ENCODE measurements at regions of chr16 and their contacts with region 1.

Region 1: GRCh38 chr16:3938848-3939624 is 58.5 kb upstream of the CREBBP start:
- DNase-seq: peak in 4 of 5 donors; percentile 56 to 64 (median 64)
- H3K4me3 ChIP-seq: peak overlapping the region in 1 of 2 donors; percentile 51
- H3K4me3 Mint-ChIP-seq: peak overlapping the region in 4 of 8 donors; percentile 31 to 72 (median 52)
- H3K27ac ChIP-seq: no peak overlapping the region
- H3K27ac Mint-ChIP-seq: no peak overlapping the region
- H3K4me1 ChIP-seq: peaks cover 12% of the 10 kb centered on the region
- H3K4me1 Mint-ChIP-seq: peaks cover 0 to 2% (median 0%) of the 10 kb centered on the region in 4 donors
- H3K27me3 ChIP-seq: no peaks in the 10 kb centered on the region
- H3K27me3 Mint-ChIP-seq: no peaks in the 10 kb centered on the region

Region 2: GRCh38 chr16:3961449-3961849 is 22.4 kb after region 1 on chr16:
- CTCF ChIA-PET with region 1: interaction called, 5 read pairs
- POLR2A ChIA-PET with region 1: no interaction called
- intact Hi-C with region 1: loop called (anchors 2 kb)
- DNase-seq: no peak
- H3K4me3 ChIP-seq: peak overlapping the region in 1 of 2 donors; percentile 32
- H3K4me3 Mint-ChIP-seq: peak overlapping the region in 4 of 8 donors; percentile 89 to 94 (median 91)
- H3K27ac ChIP-seq: no peak overlapping the region
- H3K27ac Mint-ChIP-seq: peak overlapping the region; percentile 53 to 97 (median 93)
- H3K4me1 ChIP-seq: peaks cover 25% of the 10 kb centered on the region
- H3K4me1 Mint-ChIP-seq: peaks cover 13 to 35% (median 21%) of the 10 kb centered on the region in 4 donors
- H3K27me3 ChIP-seq: no peaks in the 10 kb centered on the region
- H3K27me3 Mint-ChIP-seq: peaks cover 7 to 8% of the 10 kb centered on the region in 2 donors

Region 3: DNA sequence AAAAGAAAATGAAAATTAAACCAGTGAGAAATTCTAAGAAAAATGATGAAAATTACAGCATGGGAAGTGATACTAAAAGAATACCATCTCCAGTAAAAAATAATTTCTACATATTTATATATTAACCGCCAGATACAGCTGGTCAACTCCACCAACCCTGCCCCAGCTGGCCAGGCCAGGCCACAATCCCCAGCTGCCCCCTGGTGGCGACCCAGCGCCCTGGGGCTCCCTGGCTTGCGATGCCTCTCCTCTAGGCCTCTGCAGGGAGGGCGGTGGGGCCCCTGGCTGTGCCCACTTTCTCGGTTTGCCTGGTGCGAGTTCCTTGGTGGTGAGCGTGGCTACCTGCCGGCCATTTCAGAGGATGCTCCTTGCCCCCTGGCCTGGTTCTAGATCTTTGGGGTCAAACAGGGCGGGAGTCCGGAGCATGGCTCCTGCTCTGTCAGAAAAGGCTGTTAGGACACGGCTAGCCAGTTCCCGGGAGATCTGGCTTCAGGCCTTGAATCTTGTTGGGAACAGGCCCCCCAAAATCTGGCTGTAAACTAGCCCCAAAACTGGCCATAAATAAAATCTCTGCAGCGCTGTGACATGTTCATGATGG is 391.3 kb after region 1 on chr16:
- CTCF ChIA-PET with region 1: interaction called, 5 read pairs
- POLR2A ChIA-PET with region 1: interaction called, 3 read pairs
- intact Hi-C with region 1: loop called (anchors 2 kb)
- DNase-seq: peak; percentile 59 to 71 (median 61)
- H3K4me3 ChIP-seq: no peak overlapping the region
- H3K4me3 Mint-ChIP-seq: no peak overlapping the region
- H3K27ac ChIP-seq: no peak overlapping the region
- H3K27ac Mint-ChIP-seq: peak overlapping the region in 1 of 7 donors; percentile 50
- H3K4me1 ChIP-seq: peaks cover 9% of the 10 kb centered on the region
- H3K4me1 Mint-ChIP-seq: peaks cover 0 to 5% (median 1%) of the 10 kb centered on the region in 4 donors
- H3K27me3 ChIP-seq: no peaks in the 10 kb centered on the region
- H3K27me3 Mint-ChIP-seq: no peaks in the 10 kb centered on the region

Region 4: GRCh38 chr16:4957720-4958509 is 1018.9 kb after region 1 on chr16 and contains the start of gene SEC14L5:
- CTCF ChIA-PET with region 1: interaction called, 3 read pairs
- POLR2A ChIA-PET with region 1: no interaction called
- intact Hi-C with region 1: loop called (anchors 10 kb)
- DNase-seq: peak; percentile 86 to 96 (median 89)
- H3K4me3 ChIP-seq: peak within 1 kb of the TSS; percentile 23 to 45
- H3K4me3 Mint-ChIP-seq: peak within 1 kb of the TSS; percentile 78 to 92 (median 86)
- H3K27ac ChIP-seq: no peak within 1 kb of the TSS
- H3K27ac Mint-ChIP-seq: peak within 1 kb of the TSS; percentile 1 to 77 (median 57)
- H3K4me1 ChIP-seq: peaks cover 16% of the 10 kb centered on the region
- H3K4me1 Mint-ChIP-seq: peaks cover 12 to 28% (median 20%) of the 10 kb centered on the region in 4 donors
- H3K27me3 ChIP-seq: peaks cover 11% of the 10 kb centered on the region
- H3K27me3 Mint-ChIP-seq: peaks cover 21 to 30% of the 10 kb centered on the region in 2 donors
- total RNA-seq, gene SEC14L5: not detected